MCF 10A (cell line): ENCODE measurements at regions of chr5 and their contacts with region 1.

Region 1: DNA sequence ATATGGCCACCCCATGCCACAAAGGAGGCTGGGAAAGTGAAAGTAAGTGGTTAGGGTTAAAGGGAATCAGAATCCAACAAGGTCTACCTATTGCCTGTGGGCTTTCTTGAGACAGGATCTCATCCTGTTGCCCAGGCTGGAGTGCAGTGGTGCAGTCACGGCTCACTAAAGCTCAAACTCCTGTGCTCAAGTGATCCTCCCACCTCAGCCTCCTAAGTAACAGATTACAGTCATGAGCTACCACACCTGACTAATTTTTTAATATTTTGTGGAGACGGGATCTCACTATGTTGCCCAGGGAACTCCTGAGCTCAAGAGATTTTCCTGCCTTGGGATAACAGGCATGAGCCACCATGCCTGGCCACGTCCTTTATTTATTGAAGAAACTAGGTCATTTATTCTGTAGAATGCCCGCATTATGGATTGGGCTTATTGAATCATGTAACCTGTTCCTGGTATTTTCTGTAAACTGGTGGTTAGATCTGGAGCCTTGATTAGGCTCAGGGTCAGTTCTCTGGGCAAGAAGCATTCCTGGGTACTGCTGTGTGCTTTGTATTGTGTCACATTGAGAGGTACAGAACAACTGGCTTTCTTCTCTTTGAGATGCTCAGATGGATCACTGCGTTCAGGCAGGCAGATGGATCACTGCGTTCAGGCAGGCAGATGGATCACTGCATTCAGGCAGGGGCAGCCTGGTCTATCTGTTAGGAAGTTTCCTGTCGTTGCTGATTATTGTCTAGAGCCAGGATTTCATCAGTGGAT is 41.6 kb downstream of the ERGIC1 start:
- DNase-seq: no peak
- H3K4me3 Mint-ChIP-seq: no peak overlapping the region
- H3K27ac Mint-ChIP-seq: peak overlapping the region; percentile 14
- H3K4me1 Mint-ChIP-seq: peaks cover 18% of the 10 kb centered on the region
- H3K27me3 Mint-ChIP-seq: no peaks in the 10 kb centered on the region
- CTCF ChIP-seq: no peak

Region 2: GRCh38 chr5:172886974-172887501 is 11.4 kb after region 1 on chr5:
- CTCF ChIA-PET with region 1: interaction called, 15 read pairs
- POLR2A ChIA-PET with region 1: interaction called, 83 read pairs
- intact Hi-C with region 1: no loop called
- DNase-seq: peak; percentile 100
- H3K4me3 Mint-ChIP-seq: peak overlapping the region; percentile 61
- H3K27ac Mint-ChIP-seq: peak overlapping the region; percentile 98
- H3K4me1 Mint-ChIP-seq: peaks cover 46% of the 10 kb centered on the region
- H3K27me3 Mint-ChIP-seq: no peaks in the 10 kb centered on the region
- CTCF ChIP-seq: no peak